Tibial artery (tissue), 4 donors: ENCODE measurements at regions of chr10 and their contacts with region 1.

Region 1: DNA sequence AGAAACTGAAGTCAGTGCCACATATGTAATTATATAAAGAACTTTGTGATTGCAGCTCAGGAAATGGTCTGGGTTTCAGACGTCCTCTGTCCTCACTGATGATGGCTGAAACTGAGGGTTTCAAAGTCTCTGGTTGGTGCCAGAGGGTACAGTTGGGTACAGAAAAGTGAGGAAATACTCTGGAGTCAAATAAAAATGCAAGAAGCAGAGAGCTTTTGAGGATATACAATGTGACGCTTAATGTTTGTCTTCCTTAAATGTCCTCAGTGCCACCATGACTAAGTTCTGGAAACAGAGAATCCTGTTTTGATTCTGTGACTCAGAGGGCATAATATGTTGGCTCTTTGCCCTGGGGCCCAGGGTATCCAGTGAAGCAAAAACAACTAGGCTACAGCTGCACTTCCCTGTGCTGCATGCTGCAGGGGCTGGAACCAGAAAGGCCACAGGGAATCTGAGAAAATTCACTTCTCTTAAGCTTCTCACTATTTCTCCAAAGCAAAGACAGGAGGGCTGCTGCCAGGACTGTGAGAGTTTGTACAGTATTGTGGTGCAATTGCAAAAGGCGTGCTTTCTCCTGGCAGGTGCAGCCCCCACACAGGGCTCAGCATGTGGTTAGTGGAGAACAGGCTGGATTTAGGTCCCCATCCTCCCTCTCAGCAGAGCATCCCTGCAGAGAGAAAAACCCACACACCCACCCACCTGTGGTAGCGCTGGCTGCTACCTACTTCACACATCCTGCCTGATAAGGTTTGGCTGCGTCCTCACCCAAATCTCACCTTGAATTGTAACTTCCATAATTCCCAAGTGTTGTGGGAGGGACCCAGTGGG is 169.5 kb upstream of the SVIL start:
- DNase-seq: peak; percentile 76 to 82
- H3K4me3 ChIP-seq: no peak overlapping the region
- H3K27ac ChIP-seq: peak overlapping the region; percentile 68 to 70
- H3K4me1 ChIP-seq: peaks cover 0 to 53% (median 35%) of the 10 kb centered on the region in 4 donors
- H3K27me3 ChIP-seq: no peaks in the 10 kb centered on the region
- CTCF ChIP-seq: no peak

Region 2: GRCh38 chr10:29746080-29746797 is 58.0 kb before region 1 on chr10:
- intact Hi-C with region 1: loop called (anchors 2 kb)
- DNase-seq: no peak
- H3K4me3 ChIP-seq: no peak overlapping the region
- H3K27ac ChIP-seq: peak overlapping the region; percentile 46 to 50
- H3K4me1 ChIP-seq: peaks cover 0 to 31% (median 16%) of the 10 kb centered on the region in 4 donors
- H3K27me3 ChIP-seq: no peaks in the 10 kb centered on the region
- CTCF ChIP-seq: no peak

Region 3: GRCh38 chr10:29877793-29878491 is 73.7 kb after region 1 on chr10:
- intact Hi-C with region 1: loop called (anchors 10 kb)
- DNase-seq: peak; percentile 65 to 93
- H3K4me3 ChIP-seq: no peak overlapping the region
- H3K27ac ChIP-seq: peak overlapping the region; percentile 94 to 96
- H3K4me1 ChIP-seq: peaks cover 3 to 92% (median 64%) of the 10 kb centered on the region in 4 donors
- H3K27me3 ChIP-seq: no peaks in the 10 kb centered on the region
- CTCF ChIP-seq: no peak

Region 4: DNA sequence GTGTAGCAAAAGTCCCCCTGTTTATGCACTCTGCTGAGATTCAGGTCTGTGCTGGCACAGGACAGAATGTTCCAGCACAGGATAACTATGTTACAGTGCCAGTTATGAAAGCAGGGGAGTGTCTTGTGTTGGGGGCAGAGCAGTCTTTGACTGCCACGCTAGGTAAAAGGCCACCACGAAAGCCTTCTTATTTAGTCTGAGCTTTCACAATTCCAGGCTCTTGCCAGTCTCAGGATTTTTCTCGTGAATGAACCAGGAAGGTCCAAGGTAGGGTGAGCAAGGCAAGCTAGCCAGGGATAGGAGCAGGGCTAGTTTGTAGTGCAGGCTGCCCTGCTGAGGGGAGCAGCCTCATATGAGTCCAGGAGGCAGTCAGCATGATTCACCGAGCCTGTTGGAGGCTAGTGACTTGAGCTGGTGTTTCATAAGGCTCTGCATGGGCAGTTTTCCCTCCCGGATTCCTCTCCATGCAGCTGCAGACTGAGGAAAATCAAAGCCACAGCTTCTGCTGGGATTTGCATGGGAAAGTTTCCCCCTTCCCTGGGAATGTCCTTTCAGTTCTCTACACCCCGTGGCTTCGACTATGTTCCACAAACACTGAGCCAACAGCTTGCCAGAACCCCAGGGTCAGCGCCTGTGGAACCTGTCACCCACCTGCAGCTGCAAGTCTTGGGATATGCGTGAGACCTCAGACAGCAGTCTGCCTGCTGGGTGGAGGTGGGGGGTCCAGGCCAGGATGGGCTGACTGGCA is 142.9 kb after region 1 on chr10:
- intact Hi-C with region 1: loop called (anchors 10 kb)
- DNase-seq: peak; percentile 84 to 93
- H3K4me3 ChIP-seq: peak overlapping the region; percentile 18 to 27
- H3K27ac ChIP-seq: peak overlapping the region; percentile 82 to 87
- H3K4me1 ChIP-seq: peaks cover 0 to 64% (median 50%) of the 10 kb centered on the region in 4 donors
- H3K27me3 ChIP-seq: no peaks in the 10 kb centered on the region
- CTCF ChIP-seq: no peak